Thyroid gland (tissue), 4 donors: ENCODE measurements at regions of chr7 and their contacts with region 1.

Region 1: GRCh38 chr7:119270045-119270464 is 1002.9 kb upstream of the KCND2 start:
- DNase-seq: peak; percentile 47 to 59
- H3K4me3 ChIP-seq: no peak overlapping the region
- H3K27ac ChIP-seq: no peak overlapping the region
- H3K4me1 ChIP-seq: no peaks in the 10 kb centered on the region
- H3K27me3 ChIP-seq: no peaks in the 10 kb centered on the region
- CTCF ChIP-seq: peak; percentile 52 to 85 (median 62)
- POLR2A ChIP-seq: no peak

Region 2: DNA sequence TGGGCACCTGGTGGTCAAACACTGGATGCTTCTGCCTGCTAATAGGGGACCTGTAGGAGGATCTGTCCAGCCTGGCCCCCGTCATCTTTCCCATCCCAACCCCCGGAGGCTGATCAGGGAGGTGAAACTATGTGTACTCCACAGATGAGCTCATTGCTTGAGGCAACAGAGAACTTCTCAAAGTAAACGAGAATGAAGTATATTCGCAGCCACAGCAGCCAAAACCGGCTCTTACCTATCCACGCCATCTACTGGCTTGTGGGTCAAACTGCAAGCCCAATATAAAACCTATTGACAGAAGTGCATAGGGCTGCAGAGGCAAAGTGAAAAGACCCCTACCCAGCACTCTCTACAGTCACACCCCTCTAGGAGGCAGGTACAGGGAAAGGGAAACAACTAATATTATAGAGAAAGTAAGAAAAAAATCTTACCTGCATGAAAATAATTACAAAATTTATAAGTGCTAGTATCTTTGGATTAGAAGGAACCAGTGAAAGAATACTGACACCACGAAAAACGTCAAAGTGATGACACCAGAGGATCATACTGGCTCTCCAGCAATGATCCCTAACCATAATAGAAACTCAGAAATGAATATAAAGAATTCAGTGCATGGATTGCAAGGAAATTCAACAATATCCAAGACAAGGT is 72.1 kb before region 1 on chr7:
- intact Hi-C with region 1: no loop called
- DNase-seq: peak; percentile 10 to 26
- H3K4me3 ChIP-seq: no peak overlapping the region
- H3K27ac ChIP-seq: no peak overlapping the region
- H3K4me1 ChIP-seq: no peaks in the 10 kb centered on the region
- H3K27me3 ChIP-seq: no peaks in the 10 kb centered on the region
- CTCF ChIP-seq: peak in 4 of 6 experiments; percentile 17 to 67 (median 48)
- POLR2A ChIP-seq: no peak

Region 3: GRCh38 chr7:119397156-119397555 is 127.1 kb after region 1 on chr7:
- intact Hi-C with region 1: no loop called
- DNase-seq: no peak
- H3K4me3 ChIP-seq: no peak overlapping the region
- H3K27ac ChIP-seq: no peak overlapping the region
- H3K4me1 ChIP-seq: no peaks in the 10 kb centered on the region
- H3K27me3 ChIP-seq: no peaks in the 10 kb centered on the region
- CTCF ChIP-seq: no peak
- POLR2A ChIP-seq: no peak

Region 4: DNA sequence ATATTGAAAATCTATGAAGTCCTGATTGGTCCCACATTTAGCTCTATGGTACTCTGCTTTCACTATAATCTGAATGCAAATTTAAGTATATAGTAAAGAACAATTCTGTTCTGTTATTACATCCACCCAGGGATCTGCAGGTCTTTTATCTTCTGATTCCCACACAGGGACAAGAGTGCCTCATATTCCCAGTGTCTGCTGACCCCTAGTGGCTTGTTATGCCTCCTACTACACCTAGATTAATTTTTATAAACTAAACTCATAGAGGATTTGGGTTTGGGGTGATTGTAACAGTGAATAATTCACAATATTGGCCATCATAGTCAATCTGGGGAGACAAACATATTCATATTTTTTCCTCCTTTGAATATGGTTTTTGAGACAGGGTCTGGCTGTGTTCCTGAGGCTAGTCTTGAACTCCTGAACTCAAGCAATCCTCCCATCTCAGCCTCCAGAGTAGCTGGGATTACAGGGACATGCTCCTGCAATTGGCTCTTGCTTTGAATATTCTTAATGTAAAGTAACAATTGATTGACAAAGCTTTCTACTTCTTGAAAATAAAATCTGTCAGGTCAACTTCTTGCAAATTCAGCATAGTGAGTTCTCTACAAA is 1285.0 kb after region 1 on chr7:
- intact Hi-C with region 1: loop called (anchors 10 kb)
- DNase-seq: peak; percentile 26 to 45
- H3K4me3 ChIP-seq: no peak overlapping the region
- H3K27ac ChIP-seq: no peak overlapping the region
- H3K4me1 ChIP-seq: no peaks in the 10 kb centered on the region
- H3K27me3 ChIP-seq: no peaks in the 10 kb centered on the region
- CTCF ChIP-seq: peak; percentile 13 to 74 (median 42)
- POLR2A ChIP-seq: no peak